ENCODE measurements at regions of chr20 and their contacts with region 1.

Region 1: GRCh38 chr20:38165089-38165989 is at the start of gene TGM2:
- DNase-seq: peak; percentile 88
- H3K4me3 ChIP-seq: peak within 1 kb of the TSS; percentile 26 to 96 (median 68)
- H3K27ac ChIP-seq: peak within 1 kb of the TSS; percentile 96
- H3K4me1 ChIP-seq: peaks cover 81% of the 10 kb centered on the region
- H3K27me3 ChIP-seq: no peaks in the 10 kb centered on the region
- CTCF ChIP-seq: peak; percentile 83 to 89
- POLR2A ChIP-seq: peak; percentile 98
- total RNA-seq, gene TGM2: 708 and 868 TPM in 2 replicates

Region 2: GRCh38 chr20:38023181-38024001 is 141.9 kb before region 1 on chr20:
- CTCF ChIA-PET with region 1: no interaction called
- POLR2A ChIA-PET with region 1: no interaction called
- dilution Hi-C with region 1: no loop called
- intact Hi-C with region 1: no loop called
- DNase-seq: peak; percentile 80
- H3K4me3 ChIP-seq: no peak overlapping the region
- H3K27ac ChIP-seq: peak overlapping the region; percentile 63
- H3K4me1 ChIP-seq: peaks cover 15% of the 10 kb centered on the region
- H3K27me3 ChIP-seq: no peaks in the 10 kb centered on the region
- CTCF ChIP-seq: no peak
- POLR2A ChIP-seq: no peak

Region 3: GRCh38 chr20:38113401-38114325 is 51.7 kb before region 1 on chr20:
- CTCF ChIA-PET with region 1: interaction called, 9 read pairs
- POLR2A ChIA-PET with region 1: no interaction called
- dilution Hi-C with region 1: no loop called
- intact Hi-C with region 1: loop called (anchors 1 kb)
- DNase-seq: no peak
- H3K4me3 ChIP-seq: no peak overlapping the region
- H3K27ac ChIP-seq: peak overlapping the region; percentile 10
- H3K4me1 ChIP-seq: peaks cover 61% of the 10 kb centered on the region
- H3K27me3 ChIP-seq: no peaks in the 10 kb centered on the region
- CTCF ChIP-seq: peak; percentile 27 to 50
- POLR2A ChIP-seq: no peak

Region 4: DNA sequence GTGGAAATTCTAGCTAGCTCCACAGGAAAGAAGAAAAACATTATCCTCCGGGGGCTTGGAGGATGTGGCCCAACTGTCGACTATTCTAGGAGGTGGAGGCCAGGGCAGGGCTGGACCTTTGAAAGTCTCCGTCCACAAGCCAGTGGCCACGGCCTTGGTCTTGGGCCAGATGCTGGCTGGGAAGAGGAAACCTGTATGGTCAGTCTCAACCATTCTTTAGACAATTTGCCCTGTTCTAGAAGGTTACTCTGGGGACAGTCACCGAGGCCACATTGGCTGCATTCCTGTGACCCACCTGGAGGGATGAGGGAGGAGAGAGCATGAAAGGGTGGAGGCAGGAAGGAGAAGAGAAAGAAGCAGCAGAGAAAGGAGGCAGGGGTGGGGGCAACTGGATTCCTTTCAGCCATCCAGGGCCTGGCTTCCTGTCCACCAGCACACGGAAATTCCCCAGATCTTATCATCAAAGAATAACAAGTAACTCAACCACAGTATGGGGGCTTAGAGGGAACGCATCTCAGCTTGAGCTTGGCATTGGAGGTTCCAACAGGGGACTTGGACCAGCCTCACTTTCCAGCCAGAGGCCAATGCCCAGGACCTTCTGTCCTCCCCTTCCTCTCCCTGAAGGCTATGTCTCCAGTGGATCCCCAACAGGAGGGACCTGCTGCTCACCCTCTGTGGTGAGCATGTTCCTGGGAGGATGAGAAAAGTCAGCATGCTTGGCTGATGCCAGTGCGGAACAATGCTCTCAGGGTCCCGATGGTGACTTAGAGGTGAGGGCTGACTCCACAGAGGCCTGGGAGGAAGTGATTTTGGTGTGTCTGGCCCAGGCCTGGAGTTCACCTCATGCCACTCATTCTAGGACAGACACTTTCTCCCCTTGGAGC is 30.7 kb before region 1 on chr20:
- CTCF ChIA-PET with region 1: interaction called, 5 read pairs
- POLR2A ChIA-PET with region 1: no interaction called
- dilution Hi-C with region 1: no loop called
- intact Hi-C with region 1: loop called (anchors 1 kb)
- DNase-seq: peak; percentile 94
- H3K4me3 ChIP-seq: no peak overlapping the region
- H3K27ac ChIP-seq: peak overlapping the region; percentile 88
- H3K4me1 ChIP-seq: peaks cover 50% of the 10 kb centered on the region
- H3K27me3 ChIP-seq: no peaks in the 10 kb centered on the region
- CTCF ChIP-seq: no peak
- POLR2A ChIP-seq: peak; percentile 91

Region 5: DNA sequence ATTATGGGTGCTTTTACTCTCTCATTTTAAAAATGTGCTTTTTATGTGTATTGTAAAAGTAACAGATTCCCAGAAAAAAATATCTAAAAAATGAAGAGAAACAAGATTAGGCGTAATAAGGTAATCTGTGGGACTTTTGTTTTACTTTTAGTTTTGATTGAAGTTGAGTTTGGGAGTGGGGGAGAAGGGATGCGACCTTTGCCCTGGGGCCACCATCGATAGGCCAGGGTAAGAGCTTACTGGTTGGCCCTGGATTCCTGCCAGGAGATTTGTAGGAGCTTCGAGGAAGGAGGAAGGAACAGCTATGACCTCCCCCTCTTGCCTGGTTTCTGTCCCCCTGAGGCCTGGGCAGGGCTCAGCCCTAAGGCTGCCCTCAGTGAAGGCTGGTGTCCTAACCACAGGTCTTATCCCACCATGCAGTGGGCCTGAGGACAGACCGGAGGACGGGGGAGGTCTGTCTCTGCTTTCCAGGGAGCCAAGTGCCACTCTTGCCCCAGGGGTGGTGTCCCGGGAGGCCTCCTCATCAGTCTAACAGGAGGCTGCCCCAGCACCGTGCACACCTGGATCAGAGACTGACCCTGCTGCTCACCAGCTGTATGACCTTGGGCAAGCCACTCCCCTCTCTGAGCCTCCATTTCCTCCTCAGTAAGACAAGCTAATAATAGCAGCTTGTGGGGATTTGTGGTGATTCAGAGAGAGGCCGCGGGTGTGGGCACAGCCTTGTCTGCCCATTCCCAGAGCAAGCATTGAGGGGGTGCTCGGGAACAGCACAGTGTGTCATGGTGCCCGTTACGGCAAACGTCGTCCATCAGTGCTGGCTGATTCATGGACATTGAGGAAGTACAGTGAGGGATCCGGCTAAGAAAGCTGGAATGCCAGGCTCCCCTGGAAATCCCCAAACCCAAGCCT is 21.4 kb before region 1 on chr20:
- CTCF ChIA-PET with region 1: interaction called, 16 read pairs
- POLR2A ChIA-PET with region 1: interaction called, 12 read pairs
- dilution Hi-C with region 1: no loop called
- intact Hi-C with region 1: loop called (anchors 1 kb)
- DNase-seq: peak; percentile 96
- H3K4me3 ChIP-seq: no peak overlapping the region
- H3K27ac ChIP-seq: peak overlapping the region; percentile 93
- H3K4me1 ChIP-seq: peaks cover 87% of the 10 kb centered on the region
- H3K27me3 ChIP-seq: no peaks in the 10 kb centered on the region
- CTCF ChIP-seq: no peak
- POLR2A ChIP-seq: peak; percentile 69

Region 6: GRCh38 chr20:38152621-38153231 is 12.6 kb before region 1 on chr20:
- CTCF ChIA-PET with region 1: interaction called, 18 read pairs
- POLR2A ChIA-PET with region 1: interaction called, 5 read pairs
- dilution Hi-C with region 1: no loop called
- intact Hi-C with region 1: loop called (anchors 1 kb)
- DNase-seq: peak; percentile 96
- H3K4me3 ChIP-seq: peak overlapping the region in 1 of 3 experiments; percentile 15
- H3K27ac ChIP-seq: peak overlapping the region; percentile 100
- H3K4me1 ChIP-seq: peaks cover 90% of the 10 kb centered on the region
- H3K27me3 ChIP-seq: no peaks in the 10 kb centered on the region
- CTCF ChIP-seq: no peak
- POLR2A ChIP-seq: no peak

Region 7: DNA sequence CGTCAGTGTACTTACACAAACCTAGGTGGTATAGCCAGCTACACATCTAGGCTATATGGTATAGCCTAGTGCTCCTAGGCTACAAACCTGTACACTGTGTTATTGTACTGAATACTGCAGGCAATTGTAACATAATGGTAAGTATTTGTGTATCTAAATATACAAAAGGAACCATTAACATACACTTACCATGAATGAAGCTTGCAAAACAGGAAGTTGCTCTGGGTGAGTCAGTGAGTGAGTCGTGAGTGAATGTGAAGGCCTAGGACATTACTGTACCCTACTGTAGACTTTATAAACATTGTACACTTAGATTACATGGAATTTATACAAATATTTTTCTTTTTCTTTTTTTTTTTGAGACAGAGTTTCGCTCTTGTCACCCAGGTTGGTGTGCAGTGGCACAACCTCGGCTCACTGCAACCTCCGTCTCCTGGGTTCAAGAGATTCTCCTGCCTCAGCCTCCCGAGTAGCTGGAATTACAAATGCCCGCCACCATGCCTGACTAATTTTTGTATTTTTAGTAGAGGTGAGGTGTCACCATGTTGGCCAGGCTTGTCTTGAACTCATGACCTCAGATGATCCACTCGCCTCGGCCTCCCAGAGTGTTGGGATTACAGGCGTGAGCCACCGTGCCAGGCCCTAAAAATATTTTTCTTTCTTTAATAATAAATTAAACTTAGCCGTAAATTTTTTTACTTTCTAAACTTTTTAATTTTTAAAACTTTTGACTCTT is 110.6 kb after region 1 on chr20:
- CTCF ChIA-PET with region 1: no interaction called
- POLR2A ChIA-PET with region 1: no interaction called
- dilution Hi-C with region 1: no loop called
- intact Hi-C with region 1: loop called (anchors 5 kb)
- DNase-seq: peak; percentile 89
- H3K4me3 ChIP-seq: no peak overlapping the region
- H3K27ac ChIP-seq: peak overlapping the region; percentile 87
- H3K4me1 ChIP-seq: peaks cover 43% of the 10 kb centered on the region
- H3K27me3 ChIP-seq: no peaks in the 10 kb centered on the region
- CTCF ChIP-seq: no peak
- POLR2A ChIP-seq: peak; percentile 64